ENCODE measurements at regions of chr15 and their contacts with region 1.

Region 1: GRCh38 chr15:72312605-72313447 is 7.1 kb downstream of the CELF6 start:
- DNase-seq: peak; percentile 53 to 75
- ATAC-seq: peak; percentile 87 to 100 (median 98)
- H3K4me3 ChIP-seq: no peak overlapping the region
- H3K4me3 Mint-ChIP-seq: no peak overlapping the region
- H3K27ac ChIP-seq: no peak overlapping the region
- H3K27ac Mint-ChIP-seq: no peak overlapping the region
- H3K4me1 ChIP-seq: no peaks in the 10 kb centered on the region
- H3K4me1 Mint-ChIP-seq: no peaks in the 10 kb centered on the region
- H3K27me3 ChIP-seq: no peaks in the 10 kb centered on the region
- H3K27me3 Mint-ChIP-seq: no peaks in the 10 kb centered on the region
- CTCF ChIP-seq: peak; percentile 74

Region 2: DNA sequence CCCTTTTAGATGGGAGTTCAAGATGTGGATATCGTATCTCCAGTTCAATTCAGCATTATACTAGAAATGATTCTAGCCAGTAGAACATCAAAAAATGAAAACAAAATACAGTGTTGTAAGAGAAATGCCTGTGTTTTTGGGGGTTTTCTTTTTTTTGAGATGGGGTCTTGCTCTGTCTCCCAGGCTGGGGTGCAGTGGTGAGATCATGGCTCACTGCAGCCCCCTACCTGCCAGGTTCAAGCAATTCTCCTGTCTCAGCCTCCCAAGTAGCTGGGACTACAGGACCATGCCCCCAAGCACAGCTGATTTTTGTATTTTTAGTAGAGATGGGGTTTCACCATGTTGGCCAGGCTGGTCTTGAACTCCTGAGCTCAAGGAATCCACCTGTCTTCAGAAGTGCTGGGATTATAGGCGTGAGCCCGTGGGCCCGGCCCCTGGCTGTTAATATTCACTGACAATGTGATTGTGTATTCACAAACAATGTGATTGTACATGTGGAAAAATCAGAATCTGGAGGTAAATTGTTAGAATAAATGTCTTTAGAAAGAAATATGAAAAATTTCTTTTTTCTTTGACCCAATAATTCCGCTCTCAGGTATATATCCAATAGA is 220.3 kb after region 1 on chr15:
- intact Hi-C with region 1: loop called (anchors 5 kb)
- DNase-seq: peak in 1 of 2 donors; percentile 63
- ATAC-seq: peak in 2 of 3 donors; percentile 43 to 55
- H3K4me3 ChIP-seq: no peak overlapping the region
- H3K4me3 Mint-ChIP-seq: no peak overlapping the region
- H3K27ac ChIP-seq: no peak overlapping the region
- H3K27ac Mint-ChIP-seq: no peak overlapping the region
- H3K4me1 ChIP-seq: peaks cover 3% of the 10 kb centered on the region
- H3K4me1 Mint-ChIP-seq: peaks cover 39 to 47% of the 10 kb centered on the region in 2 donors
- H3K27me3 ChIP-seq: no peaks in the 10 kb centered on the region
- H3K27me3 Mint-ChIP-seq: no peaks in the 10 kb centered on the region
- CTCF ChIP-seq: peak; percentile 38

Region 3: DNA sequence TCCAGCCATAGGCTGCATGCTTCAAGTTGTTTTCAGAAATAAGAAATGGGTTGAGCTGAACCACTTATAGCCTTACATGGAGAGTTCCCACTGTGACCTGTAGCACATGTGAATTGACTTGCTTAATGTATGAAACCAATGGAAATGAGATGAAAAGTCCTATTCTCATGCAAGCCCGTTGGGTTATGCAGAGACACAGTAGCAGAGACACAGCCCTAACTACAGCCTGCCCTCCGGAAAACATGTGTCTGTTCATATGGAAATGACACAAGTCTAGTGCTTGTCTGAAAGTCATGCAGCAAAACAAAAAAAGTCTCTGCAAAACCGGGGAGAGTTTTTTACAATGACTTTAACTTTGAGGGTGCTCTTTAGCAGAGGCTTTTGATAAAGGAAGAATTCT is 358.7 kb after region 1 on chr15:
- intact Hi-C with region 1: loop called (anchors 10 kb)
- DNase-seq: no peak
- ATAC-seq: no peak
- H3K4me3 ChIP-seq: no peak overlapping the region
- H3K4me3 Mint-ChIP-seq: no peak overlapping the region
- H3K27ac ChIP-seq: no peak overlapping the region
- H3K27ac Mint-ChIP-seq: no peak overlapping the region
- H3K4me1 ChIP-seq: peaks cover 6% of the 10 kb centered on the region
- H3K4me1 Mint-ChIP-seq: peaks cover 6 to 7% of the 10 kb centered on the region in 2 donors
- H3K27me3 ChIP-seq: peaks cover 2% of the 10 kb centered on the region
- H3K27me3 Mint-ChIP-seq: peaks cover 10 to 16% of the 10 kb centered on the region in 2 donors
- CTCF ChIP-seq: no peak

Measured in natural killer cell (primary cell).